ENCODE measurements at regions of chr10 and their contacts with region 1.

Region 1: DNA sequence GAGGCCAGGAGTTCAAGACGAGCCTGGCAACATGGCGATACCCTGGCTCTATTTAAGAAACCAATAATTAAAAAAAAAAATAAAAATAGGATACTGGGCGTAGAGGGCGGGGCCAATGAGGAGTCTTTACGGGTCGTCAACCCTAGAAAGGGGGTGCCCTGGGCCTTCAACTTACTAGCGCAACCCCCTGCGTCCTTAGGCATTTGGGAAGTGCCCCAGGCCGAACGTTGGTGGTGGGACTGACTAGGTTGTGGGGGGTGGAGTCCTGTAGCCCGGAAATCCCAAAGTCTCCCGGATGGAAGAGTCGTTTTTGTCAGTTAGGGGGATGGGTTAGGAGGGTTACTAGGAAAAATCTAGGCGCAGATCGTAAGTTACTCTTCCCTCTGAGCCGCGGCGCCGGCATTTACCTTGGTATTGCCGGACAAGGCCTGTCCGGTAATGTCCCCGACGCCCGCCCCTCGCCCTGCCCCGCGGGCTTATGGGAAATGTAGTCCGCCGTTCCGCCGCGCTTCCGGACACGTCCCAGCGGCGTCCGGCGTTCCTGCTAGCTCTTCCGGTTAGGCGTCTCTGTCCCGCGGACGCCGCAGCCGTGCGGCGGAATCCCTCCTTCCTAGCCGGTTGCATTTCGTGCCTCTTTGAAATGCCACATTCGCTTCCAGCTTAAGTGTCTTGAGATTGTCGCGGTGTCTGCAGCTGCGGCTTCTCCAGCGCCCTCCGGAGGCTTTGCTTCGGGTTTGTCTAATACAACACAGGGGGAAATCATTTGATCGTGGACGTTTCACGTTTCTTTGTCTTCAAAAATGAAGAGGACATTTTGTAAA is 1.3 kb upstream of the ACBD5 start:
- DNase-seq: peak; percentile 94 to 97 (median 97)
- H3K4me3 ChIP-seq: peak overlapping the region; percentile 74 to 93 (median 88)
- H3K27ac ChIP-seq: peak overlapping the region; percentile 90 to 95
- H3K4me1 ChIP-seq: peaks cover 3 to 34% (median 29%) of the 10 kb centered on the region in 4 experiments
- H3K27me3 ChIP-seq: no peaks in the 10 kb centered on the region

Region 2: GRCh38 chr10:27258492-27258837 is 16.6 kb after region 1 on chr10:
- CTCF ChIA-PET with region 1: interaction called, 19 read pairs
- POLR2A ChIA-PET with region 1: interaction called, 14 read pairs
- DNase-seq: no peak
- H3K4me3 ChIP-seq: peak overlapping the region; percentile 47 to 82 (median 70)
- H3K27ac ChIP-seq: no peak overlapping the region
- H3K4me1 ChIP-seq: peaks cover 3 to 18% (median 18%) of the 10 kb centered on the region in 4 experiments
- H3K27me3 ChIP-seq: peaks cover 8 to 28% (median 14%) of the 10 kb centered on the region in 5 experiments

Region 3: DNA sequence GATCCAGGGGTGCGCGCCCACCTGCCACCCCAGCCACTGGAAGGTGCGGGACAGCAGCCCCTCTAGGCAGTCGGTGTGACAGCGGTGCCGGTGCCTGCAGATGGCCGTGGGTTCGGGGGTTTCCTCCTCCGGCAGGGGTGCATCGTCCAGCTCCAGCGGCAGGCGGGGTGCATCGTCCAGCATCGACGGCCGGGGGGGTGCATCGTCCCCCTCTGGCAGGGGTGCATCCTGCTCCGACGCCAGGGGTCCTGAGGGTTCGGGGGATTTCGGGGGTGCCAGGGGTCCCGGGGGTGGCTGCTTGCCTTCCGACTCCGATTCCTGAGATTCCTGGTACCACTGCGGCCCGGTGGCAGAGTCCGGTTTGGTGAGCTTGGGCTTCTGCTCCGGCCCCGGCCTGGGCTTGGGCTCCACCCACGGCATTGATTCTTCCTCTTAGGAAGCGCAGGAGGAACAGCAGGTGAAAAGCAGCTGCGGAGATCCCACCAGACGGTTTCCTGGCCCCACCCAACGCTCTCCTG is 172.0 kb after region 1 on chr10:
- CTCF ChIA-PET with region 1: no interaction called
- POLR2A ChIA-PET with region 1: no interaction called
- DNase-seq: no peak
- H3K4me3 ChIP-seq: peak overlapping the region in 1 of 7 experiments; percentile 55
- H3K27ac ChIP-seq: no peak overlapping the region
- H3K4me1 ChIP-seq: peaks cover 0 to 4% (median 0%) of the 10 kb centered on the region in 4 experiments
- H3K27me3 ChIP-seq: peaks cover 0 to 20% (median 4%) of the 10 kb centered on the region in 5 experiments

Region 4: DNA sequence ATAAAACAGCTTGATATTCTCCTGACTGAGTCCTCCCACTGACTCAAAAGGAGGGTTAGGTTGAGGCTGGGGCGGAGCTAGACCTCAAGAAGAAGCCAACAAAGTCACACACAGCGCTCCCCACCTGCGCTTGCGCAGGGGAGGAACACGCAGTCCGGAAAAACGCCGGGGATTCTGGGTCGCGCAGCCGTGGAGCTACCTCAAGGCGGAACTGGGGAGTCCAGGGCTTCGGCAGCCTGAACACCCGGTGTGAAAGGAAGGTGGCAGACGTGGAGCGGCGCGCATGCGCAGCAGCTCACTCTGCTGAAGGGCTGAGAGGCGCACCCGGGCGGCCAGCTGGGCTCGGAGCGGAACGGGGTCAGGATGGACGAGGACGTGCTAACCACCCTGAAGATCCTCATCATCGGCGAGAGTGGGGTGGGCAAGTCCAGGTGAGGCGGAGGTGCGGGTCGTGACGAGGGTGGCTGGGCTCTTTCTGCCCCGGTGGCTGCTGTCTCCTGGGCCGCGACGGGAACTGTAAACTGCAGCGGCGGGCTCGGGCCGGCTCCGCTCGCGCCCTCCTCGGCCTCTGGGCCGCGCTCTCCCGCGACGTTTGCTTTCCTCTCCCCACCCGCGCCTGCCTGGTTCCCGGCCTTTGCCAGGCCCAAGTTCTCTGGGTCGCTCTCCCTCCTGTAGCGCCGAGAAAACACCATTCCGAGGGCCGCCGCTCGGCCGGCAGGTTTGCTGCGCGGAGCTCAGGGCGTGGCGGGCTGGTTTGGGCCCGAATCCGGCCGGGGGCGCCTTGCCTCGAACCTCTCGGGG is 262.3 kb after region 1 on chr10 and contains the start of gene RAB18:
- CTCF ChIA-PET with region 1: no interaction called
- POLR2A ChIA-PET with region 1: no interaction called
- DNase-seq: peak; percentile 99
- H3K4me3 ChIP-seq: peak within 1 kb of the TSS; percentile 77 to 94 (median 84)
- H3K27ac ChIP-seq: peak within 1 kb of the TSS; percentile 91 to 94
- H3K4me1 ChIP-seq: peaks cover 6 to 22% (median 17%) of the 10 kb centered on the region in 4 experiments
- H3K27me3 ChIP-seq: no peaks in the 10 kb centered on the region

Measured in common myeloid progenitor, CD34-positive (primary cell).